A549 (cell line): ENCODE measurements at regions of chr1 and their contacts with region 1.

Region 1: DNA sequence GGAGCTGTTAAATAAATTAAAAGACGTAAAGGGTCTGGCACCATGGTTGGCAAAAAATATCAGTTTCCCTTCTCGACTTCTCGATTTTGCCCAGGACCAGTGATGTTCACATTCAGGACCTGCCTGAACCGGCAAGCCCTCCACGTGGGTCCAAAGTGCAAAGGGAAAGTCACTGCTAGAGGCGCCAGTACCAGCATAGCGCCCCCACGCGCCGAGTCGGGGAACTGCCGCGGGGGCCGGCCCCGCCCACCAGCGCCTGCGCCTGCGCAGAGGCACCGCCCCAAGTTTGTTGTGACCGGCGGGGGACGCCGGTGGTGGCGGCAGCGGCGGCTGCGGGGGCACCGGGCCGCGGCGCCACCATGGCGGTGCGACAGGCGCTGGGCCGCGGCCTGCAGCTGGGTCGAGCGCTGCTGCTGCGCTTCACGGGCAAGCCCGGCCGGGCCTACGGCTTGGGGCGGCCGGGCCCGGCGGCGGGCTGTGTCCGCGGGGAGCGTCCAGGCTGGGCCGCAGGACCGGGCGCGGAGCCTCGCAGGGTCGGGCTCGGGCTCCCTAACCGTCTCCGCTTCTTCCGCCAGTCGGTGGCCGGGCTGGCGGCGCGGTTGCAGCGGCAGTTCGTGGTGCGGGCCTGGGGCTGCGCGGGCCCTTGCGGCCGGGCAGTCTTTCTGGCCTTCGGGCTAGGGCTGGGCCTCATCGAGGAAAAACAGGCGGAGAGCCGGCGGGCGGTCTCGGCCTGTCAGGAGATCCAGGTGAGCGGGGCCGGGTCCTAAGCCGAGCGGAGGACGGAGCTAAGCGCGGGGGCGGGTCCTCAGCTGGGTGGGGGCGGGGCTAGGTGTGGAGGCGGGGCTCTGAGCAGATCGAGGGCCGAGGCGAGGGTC is at the start of gene PINK1:
- DNase-seq: peak; percentile 50 to 76
- ATAC-seq: peak; percentile 91 to 92
- H3K4me3 ChIP-seq: peak within 1 kb of the TSS; percentile 100
- H3K27ac ChIP-seq: peak within 1 kb of the TSS; percentile 92
- H3K4me1 ChIP-seq: peaks cover 18% of the 10 kb centered on the region
- CTCF ChIP-seq: peak; percentile 89
- EP300 ChIP-seq: no peak
- POLR2A ChIP-seq: peak; percentile 26; the same call in 1 of the 2 replicates
- RAD21 ChIP-seq: peak; percentile 65 to 69
- polyA plus RNA-seq, gene PINK1: 18.9 and 19.9 TPM in 2 replicates

Region 2: GRCh38 chr1:19811206-19811851 is 822.1 kb before region 1 on chr1:
- CTCF ChIA-PET with region 1: no interaction called
- POLR2A ChIA-PET with region 1: no interaction called
- DNase-seq: peak; percentile 24 to 49
- ATAC-seq: peak; percentile 67 to 89; a peak in 4 of 6 replicates
- H3K4me3 ChIP-seq: no peak overlapping the region
- H3K27ac ChIP-seq: no peak overlapping the region
- H3K4me1 ChIP-seq: no peaks in the 10 kb centered on the region
- CTCF ChIP-seq: peak; percentile 41
- EP300 ChIP-seq: no peak
- POLR2A ChIP-seq: no peak
- RAD21 ChIP-seq: peak in 1 of 2 experiments; percentile 38; a peak in 2 of 5 replicates

Region 3: GRCh38 chr1:20413136-20413775 is 220.2 kb before region 1 on chr1:
- CTCF ChIA-PET with region 1: no interaction called
- POLR2A ChIA-PET with region 1: no interaction called
- DNase-seq: no peak
- ATAC-seq: no peak
- H3K4me3 ChIP-seq: no peak overlapping the region
- H3K27ac ChIP-seq: peak overlapping the region in 1 of 2 experiments; percentile 39; a peak in 1 of 6 replicates
- H3K4me1 ChIP-seq: peaks cover 13% of the 10 kb centered on the region
- CTCF ChIP-seq: no peak
- EP300 ChIP-seq: no peak
- POLR2A ChIP-seq: no peak
- RAD21 ChIP-seq: no peak

Region 4: GRCh38 chr1:20551945-20552727 is 81.3 kb before region 1 on chr1 and contains the start of gene FAM43B:
- CTCF ChIA-PET with region 1: interaction called, 11 read pairs
- POLR2A ChIA-PET with region 1: interaction called, 8 read pairs
- DNase-seq: peak; percentile 62 to 77
- ATAC-seq: peak; percentile 87 to 95
- H3K4me3 ChIP-seq: peak within 1 kb of the TSS; percentile 67
- H3K27ac ChIP-seq: peak within 1 kb of the TSS; percentile 77 to 92
- H3K4me1 ChIP-seq: peaks cover 8% of the 10 kb centered on the region
- CTCF ChIP-seq: no peak
- EP300 ChIP-seq: no peak
- POLR2A ChIP-seq: peak; percentile 60
- RAD21 ChIP-seq: no peak
- polyA plus RNA-seq, gene FAM43B: 0.53 and 0.76 TPM in 2 replicates

Region 5: GRCh38 chr1:20574686-20575540 is 58.5 kb before region 1 on chr1:
- CTCF ChIA-PET with region 1: interaction called, 43 read pairs
- POLR2A ChIA-PET with region 1: interaction called, 3 read pairs
- DNase-seq: peak; percentile 80 to 82
- ATAC-seq: peak; percentile 94 to 97
- H3K4me3 ChIP-seq: no peak overlapping the region
- H3K27ac ChIP-seq: peak overlapping the region; percentile 13 to 80; a peak in 4 of 6 replicates
- H3K4me1 ChIP-seq: peaks cover 14% of the 10 kb centered on the region
- CTCF ChIP-seq: peak; percentile 70
- EP300 ChIP-seq: no peak
- POLR2A ChIP-seq: no peak
- RAD21 ChIP-seq: peak; percentile 82 to 90

Region 6: GRCh38 chr1:20609541-20609940 is 23.9 kb before region 1 on chr1:
- CTCF ChIA-PET with region 1: interaction called, 23 read pairs
- POLR2A ChIA-PET with region 1: no interaction called
- DNase-seq: no peak
- ATAC-seq: no peak
- H3K4me3 ChIP-seq: no peak overlapping the region
- H3K27ac ChIP-seq: peak overlapping the region in 1 of 2 experiments; percentile 44; a peak in 1 of 6 replicates
- H3K4me1 ChIP-seq: peaks cover 48% of the 10 kb centered on the region
- CTCF ChIP-seq: no peak
- EP300 ChIP-seq: no peak
- POLR2A ChIP-seq: no peak
- RAD21 ChIP-seq: no peak